Activated CD4-positive, alpha-beta T cell treated with anti-CD3 and anti-CD28 coated beads, Interleukin-2, amount 10 ng/mL, durations not matched to agents 24 days and 14 days (primary cell): ENCODE measurements at regions of chr14 and their contacts with region 1.

Region 1: DNA sequence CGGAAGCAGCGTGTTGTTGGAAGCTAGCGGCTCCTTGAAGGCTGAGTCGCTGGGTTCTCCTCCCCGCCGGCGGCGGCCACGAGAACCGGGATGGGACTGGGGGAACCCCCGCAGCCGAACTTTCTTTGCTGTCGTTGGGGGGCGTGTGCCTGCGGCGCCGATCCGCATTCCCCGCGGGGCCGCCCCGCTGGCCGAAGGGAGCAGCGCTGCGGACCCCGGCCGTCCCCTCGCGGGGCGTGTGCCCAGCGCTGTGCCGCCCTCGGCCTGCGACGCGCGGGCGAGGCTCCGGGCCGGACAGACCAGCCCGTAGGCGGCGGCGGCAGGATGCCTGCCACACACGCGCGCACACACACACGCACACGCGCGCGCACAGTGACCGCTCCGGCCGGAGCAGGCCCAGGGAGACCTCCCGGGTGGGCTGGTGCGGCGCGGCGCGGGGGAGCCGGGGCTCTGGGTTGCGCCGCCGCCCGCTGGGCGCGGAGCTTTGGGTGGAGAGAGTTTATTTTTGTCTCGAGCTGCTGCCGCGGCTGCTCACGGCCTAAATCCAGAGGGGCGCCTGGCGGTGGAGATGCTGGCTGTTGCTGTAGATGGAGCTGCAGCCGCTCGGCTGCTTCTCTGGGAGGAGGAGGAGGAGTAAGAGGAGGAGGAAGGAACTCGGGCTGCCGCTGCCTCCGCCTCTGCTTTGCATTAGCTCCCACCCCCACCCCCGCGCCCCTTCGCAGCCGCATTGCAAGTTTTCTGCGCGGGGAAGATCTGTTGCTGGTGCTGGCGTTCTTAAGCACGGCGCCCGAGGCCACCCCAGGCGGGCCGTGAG is at the start of gene SAMD4A:
- DNase-seq: peak; percentile 86
- H3K4me3 Mint-ChIP-seq: peak within 1 kb of the TSS; percentile 93
- H3K27ac Mint-ChIP-seq: peak within 1 kb of the TSS; percentile 87
- H3K4me1 Mint-ChIP-seq: peaks cover 21% of the 10 kb centered on the region
- H3K27me3 Mint-ChIP-seq: peaks cover 45% of the 10 kb centered on the region
- total RNA-seq, gene SAMD4A: 4.6 and 5.7 TPM in 2 replicates

Region 2: GRCh38 chr14:54435500-54435981 is 131.1 kb before region 1 on chr14:
- intact Hi-C with region 1: loop called (anchors 2 kb)
- DNase-seq: no peak
- H3K4me3 Mint-ChIP-seq: peak overlapping the region; percentile 74
- H3K27ac Mint-ChIP-seq: peak overlapping the region; percentile 89
- H3K4me1 Mint-ChIP-seq: peaks cover 62% of the 10 kb centered on the region
- H3K27me3 Mint-ChIP-seq: no peaks in the 10 kb centered on the region

Region 3: DNA sequence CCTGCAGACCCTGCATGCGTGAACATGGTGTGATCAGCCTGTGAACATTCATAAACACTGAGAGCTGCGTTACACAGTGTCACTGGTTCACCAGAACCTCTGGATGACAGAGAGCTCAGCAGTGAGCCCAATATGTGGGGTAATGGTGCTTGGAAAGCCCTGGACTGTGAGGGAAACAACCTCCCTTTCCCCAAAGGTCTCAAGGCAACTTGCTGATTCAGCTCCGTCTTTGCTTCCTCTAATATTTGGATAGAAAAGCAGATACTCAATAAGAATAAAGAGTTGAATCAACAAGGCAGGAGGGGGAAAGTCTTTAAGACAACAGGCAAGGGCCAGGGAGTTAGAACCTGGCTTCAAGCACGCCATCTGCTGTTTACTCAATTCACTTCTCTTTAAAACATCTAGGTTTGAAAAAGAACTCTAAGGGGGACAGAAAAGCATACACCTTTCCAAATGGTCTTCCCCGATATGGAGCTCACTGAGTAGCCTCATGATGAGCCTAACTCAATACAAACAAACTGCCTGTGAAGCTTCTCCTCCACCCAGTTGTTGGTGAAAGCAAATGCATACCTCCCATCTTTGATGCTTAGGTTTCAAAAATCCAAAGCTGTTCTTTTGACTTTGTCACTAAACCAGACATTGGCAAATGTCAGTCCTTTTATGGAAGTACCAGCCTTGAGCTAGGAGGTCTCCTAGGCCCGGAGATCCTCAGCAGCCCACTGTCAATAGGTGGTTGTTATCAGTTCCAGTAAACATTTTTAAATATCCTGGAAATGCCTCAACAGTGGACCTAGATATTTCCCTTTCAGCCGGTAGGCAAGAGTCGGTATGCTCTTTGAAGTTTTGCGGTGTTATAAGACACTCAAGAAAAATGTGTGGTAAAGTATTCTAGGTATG is 76.4 kb after region 1 on chr14:
- intact Hi-C with region 1: loop called (anchors 2 kb)
- DNase-seq: peak; percentile 66
- H3K4me3 Mint-ChIP-seq: no peak overlapping the region
- H3K27ac Mint-ChIP-seq: no peak overlapping the region
- H3K4me1 Mint-ChIP-seq: peaks cover 2% of the 10 kb centered on the region
- H3K27me3 Mint-ChIP-seq: peaks cover 5% of the 10 kb centered on the region

Region 4: DNA sequence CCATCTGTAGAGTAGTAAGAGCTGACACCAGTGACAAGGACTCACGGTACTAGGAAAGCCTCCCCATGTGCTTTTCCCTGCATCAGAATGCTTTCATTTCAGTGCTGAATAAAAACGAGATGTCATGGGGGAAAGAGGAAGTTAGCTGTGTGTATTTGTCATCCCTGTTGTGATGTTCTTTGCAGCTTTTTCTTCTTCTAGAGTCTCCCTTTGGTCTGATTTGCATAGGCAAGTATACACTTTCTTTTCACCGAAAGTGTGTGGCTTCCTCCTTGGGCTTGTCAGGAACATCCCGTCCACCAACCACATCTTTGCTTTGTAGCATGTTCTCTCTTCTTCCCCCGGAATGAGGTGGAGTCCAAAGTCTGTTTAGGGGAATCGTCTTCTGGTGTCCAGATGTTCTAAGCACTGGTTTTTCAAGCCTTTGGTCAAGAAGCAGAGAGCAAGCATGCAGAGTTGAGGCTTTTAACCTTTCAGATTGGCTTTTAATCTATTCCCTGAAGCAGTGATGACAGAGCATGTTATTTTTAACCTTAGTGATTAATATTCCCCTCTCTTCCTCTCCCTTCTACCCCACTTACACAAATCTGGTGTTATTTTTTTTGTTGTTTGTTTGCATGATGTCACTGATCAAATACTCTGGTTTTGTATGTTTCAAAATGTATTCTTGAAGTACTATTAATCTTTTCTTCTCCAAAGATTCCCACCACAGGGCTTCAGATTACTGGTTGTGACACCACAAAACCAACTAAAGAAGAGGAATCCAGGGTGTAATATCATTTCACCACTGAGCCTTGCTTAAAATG is 163.7 kb after region 1 on chr14:
- intact Hi-C with region 1: loop called (anchors 1 kb)
- DNase-seq: peak; percentile 84
- H3K4me3 Mint-ChIP-seq: peak overlapping the region; percentile 70
- H3K27ac Mint-ChIP-seq: peak overlapping the region; percentile 88
- H3K4me1 Mint-ChIP-seq: peaks cover 40% of the 10 kb centered on the region
- H3K27me3 Mint-ChIP-seq: peaks cover 28% of the 10 kb centered on the region

Region 5: GRCh38 chr14:54792288-54792687 is 225.7 kb after region 1 on chr14:
- intact Hi-C with region 1: no loop called
- DNase-seq: no peak
- H3K4me3 Mint-ChIP-seq: no peak overlapping the region
- H3K27ac Mint-ChIP-seq: no peak overlapping the region
- H3K4me1 Mint-ChIP-seq: peaks cover 1% of the 10 kb centered on the region
- H3K27me3 Mint-ChIP-seq: peaks cover 3% of the 10 kb centered on the region

Region 6: GRCh38 chr14:54805521-54806322 is 239.1 kb after region 1 on chr14:
- intact Hi-C with region 1: loop called (anchors 1 kb)
- DNase-seq: peak; percentile 92
- H3K4me3 Mint-ChIP-seq: no peak overlapping the region
- H3K27ac Mint-ChIP-seq: no peak overlapping the region
- H3K4me1 Mint-ChIP-seq: peaks cover 4% of the 10 kb centered on the region
- H3K27me3 Mint-ChIP-seq: peaks cover 27% of the 10 kb centered on the region

Region 7: GRCh38 chr14:54981698-54982097 is 415.1 kb after region 1 on chr14:
- intact Hi-C with region 1: loop called (anchors 5 kb)
- DNase-seq: no peak
- H3K4me3 Mint-ChIP-seq: no peak overlapping the region
- H3K27ac Mint-ChIP-seq: no peak overlapping the region
- H3K4me1 Mint-ChIP-seq: peaks cover 4% of the 10 kb centered on the region
- H3K27me3 Mint-ChIP-seq: no peaks in the 10 kb centered on the region